ENCODE measurements at regions of chr9 and their contacts with region 1.

Region 1: DNA sequence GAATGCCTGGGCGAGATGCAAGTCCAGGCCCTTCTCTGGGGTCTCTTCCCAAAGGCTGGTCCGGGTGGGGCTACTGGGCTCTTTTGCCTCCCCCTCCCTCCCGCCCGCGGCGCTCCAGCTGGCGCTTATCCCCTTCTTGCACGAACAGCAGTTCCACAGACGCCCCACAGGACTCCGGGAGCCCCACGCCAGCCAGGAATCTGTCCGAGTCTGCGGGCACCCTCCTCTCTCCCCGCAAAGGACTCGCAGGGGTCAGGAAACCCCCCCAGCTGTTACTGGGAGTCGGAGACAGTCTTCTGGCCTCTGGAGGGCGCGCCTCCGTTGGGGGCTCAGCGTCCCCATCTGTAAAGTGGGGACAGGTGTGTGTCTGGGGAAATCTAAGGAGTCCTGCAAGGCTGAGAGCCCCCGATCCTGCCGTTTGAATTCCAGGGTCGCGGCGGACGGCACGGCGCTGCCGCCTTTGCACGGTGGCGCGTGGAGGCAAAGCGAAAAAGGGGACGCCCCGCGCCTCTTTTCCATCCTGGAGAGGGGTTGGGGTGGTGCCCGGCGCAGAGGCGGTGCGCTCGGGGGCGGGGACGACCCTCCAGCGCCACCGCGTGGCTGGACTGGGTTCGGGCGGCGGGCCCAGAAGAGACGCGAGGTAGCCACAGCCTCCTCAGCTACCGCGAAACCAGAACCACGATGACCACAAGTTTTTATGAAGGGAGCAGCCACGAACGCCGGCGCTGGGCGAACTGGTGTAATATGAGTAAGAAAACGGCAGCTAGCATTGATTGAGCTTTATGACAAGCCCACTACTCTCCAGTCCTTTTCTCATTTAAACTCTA is 2.9 kb upstream of the CCIN start:
- DNase-seq: peak; percentile 90
- ATAC-seq: peak; percentile 97
- H3K4me3 Mint-ChIP-seq: peak overlapping the region; percentile 69
- H3K27ac Mint-ChIP-seq: peak overlapping the region; percentile 31
- H3K4me1 Mint-ChIP-seq: peaks cover 6% of the 10 kb centered on the region
- H3K27me3 Mint-ChIP-seq: no peaks in the 10 kb centered on the region

Region 2: GRCh38 chr9:36110434-36110833 is 55.9 kb before region 1 on chr9:
- CTCF ChIA-PET with region 1: interaction called, 246 read pairs
- POLR2A ChIA-PET with region 1: no interaction called
- intact Hi-C with region 1: no loop called
- DNase-seq: no peak
- ATAC-seq: no peak
- H3K4me3 Mint-ChIP-seq: no peak overlapping the region
- H3K27ac Mint-ChIP-seq: no peak overlapping the region
- H3K4me1 Mint-ChIP-seq: peaks cover 10% of the 10 kb centered on the region
- H3K27me3 Mint-ChIP-seq: no peaks in the 10 kb centered on the region

Region 3: GRCh38 chr9:36136272-36136893 is 29.9 kb before region 1 on chr9 and contains the start of gene GLIPR2:
- CTCF ChIA-PET with region 1: interaction called, 14 read pairs
- POLR2A ChIA-PET with region 1: interaction called, 3 read pairs
- intact Hi-C with region 1: loop called (anchors 1 kb)
- DNase-seq: peak; percentile 88
- ATAC-seq: peak; percentile 96
- H3K4me3 Mint-ChIP-seq: peak within 1 kb of the TSS; percentile 81
- H3K27ac Mint-ChIP-seq: peak within 1 kb of the TSS; percentile 48
- H3K4me1 Mint-ChIP-seq: peaks cover 45% of the 10 kb centered on the region
- H3K27me3 Mint-ChIP-seq: no peaks in the 10 kb centered on the region
- total RNA-seq, gene GLIPR2: 13.7 to 18.4 TPM

Region 4: GRCh38 chr9:36214571-36214970 is 48.3 kb after region 1 on chr9:
- CTCF ChIA-PET with region 1: no interaction called
- POLR2A ChIA-PET with region 1: no interaction called
- intact Hi-C with region 1: no loop called
- DNase-seq: no peak
- ATAC-seq: no peak
- H3K4me3 Mint-ChIP-seq: no peak overlapping the region
- H3K27ac Mint-ChIP-seq: peak overlapping the region; percentile 48
- H3K4me1 Mint-ChIP-seq: peaks cover 46% of the 10 kb centered on the region
- H3K27me3 Mint-ChIP-seq: no peaks in the 10 kb centered on the region

Measured in activated CD4-positive, alpha-beta T cell treated with anti-CD3 and anti-CD28 coated beads for 36 hours (primary cell).